SK-N-SH (cell line): ENCODE measurements at regions of chr18 and their contacts with region 1.

Region 1: DNA sequence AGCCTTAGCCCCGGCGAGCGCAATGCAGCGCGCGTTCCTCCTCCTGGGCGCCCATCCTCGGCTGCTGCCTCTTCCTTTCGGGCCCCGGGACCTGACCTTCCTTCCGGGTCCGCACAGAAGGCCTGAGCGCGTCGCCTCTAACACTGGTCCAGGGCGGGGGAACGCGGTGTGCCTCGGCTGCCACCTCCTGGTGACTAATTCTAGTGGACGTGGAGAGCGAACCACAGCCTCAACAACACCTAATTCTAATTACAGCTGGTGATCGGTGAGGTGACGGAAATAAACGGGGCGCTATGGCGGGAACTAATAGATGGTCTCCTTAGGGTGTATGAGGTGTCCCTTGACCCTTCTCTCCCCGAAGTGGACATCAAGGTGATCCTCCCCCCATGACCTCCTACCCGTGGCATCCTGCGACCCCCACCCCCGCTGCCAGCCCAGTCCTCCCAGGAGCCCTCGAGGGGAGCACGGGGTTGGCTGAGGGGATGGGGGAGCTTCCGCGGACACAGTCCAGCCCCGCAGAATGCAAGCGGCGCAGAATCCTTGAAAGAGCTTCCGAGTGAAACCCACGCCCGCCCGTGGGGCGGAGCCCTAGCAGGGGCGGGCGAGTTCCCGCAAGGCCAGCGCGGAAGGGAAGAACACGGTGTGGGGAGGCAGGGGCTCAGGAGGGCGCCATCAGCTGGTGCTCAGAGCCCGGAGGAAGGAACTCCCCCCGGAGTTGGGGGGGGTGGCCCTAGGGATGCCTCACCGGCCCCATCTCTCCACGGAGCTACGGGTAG is 12.8 kb upstream of the HMSD start:
- DNase-seq: peak; percentile 85
- H3K4me3 ChIP-seq: peak overlapping the region; percentile 53 to 62
- H3K27ac ChIP-seq: no peak overlapping the region
- H3K4me1 ChIP-seq: peaks cover 0 to 9% of the 10 kb centered on the region in 2 experiments; a peak in 2 of 4 replicates
- H3K27me3 ChIP-seq: peaks cover 19% of the 10 kb centered on the region; the same call in 1 of the 2 replicates
- CTCF ChIP-seq: peak; percentile 63
- EP300 ChIP-seq: no peak
- RAD21 ChIP-seq: peak; percentile 67

Region 2: DNA sequence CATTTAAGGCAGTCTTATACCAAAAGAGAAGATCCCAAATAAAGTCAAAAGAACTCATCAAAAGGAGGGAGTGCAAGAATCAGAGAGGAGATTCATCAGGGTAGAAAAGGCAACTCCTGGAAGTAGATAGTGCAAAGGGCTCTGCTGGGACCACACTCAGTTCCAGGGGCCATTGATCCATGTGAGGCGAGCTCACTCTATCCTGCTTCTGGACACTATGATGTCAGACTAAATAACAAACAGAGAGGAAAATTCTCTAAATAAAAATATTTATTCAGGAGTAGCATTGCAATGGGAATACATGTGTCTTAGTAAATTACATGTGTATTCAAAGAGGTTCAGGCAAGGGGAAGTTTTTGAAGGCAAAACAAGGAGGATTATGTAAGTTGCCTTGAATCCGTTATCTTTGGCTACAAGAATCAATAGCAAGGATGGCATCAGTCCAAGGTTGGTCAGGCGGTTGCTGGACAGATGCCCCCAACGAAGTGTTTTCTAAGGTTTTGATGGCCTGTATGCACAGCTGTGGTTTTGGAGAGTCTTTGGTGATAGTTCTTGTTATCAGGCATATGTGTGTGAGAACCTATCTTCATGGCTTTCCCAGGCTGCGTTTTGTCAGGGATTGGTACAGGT is 407.4 kb before region 1 on chr18:
- CTCF ChIA-PET with region 1: no interaction called
- POLR2A ChIA-PET with region 1: no interaction called
- DNase-seq: no peak
- H3K4me3 ChIP-seq: no peak overlapping the region
- H3K27ac ChIP-seq: no peak overlapping the region
- H3K4me1 ChIP-seq: no peaks in the 10 kb centered on the region
- H3K27me3 ChIP-seq: peaks cover 8% of the 10 kb centered on the region; the same call in 1 of the 2 replicates
- CTCF ChIP-seq: no peak
- EP300 ChIP-seq: no peak
- RAD21 ChIP-seq: no peak

Region 3: DNA sequence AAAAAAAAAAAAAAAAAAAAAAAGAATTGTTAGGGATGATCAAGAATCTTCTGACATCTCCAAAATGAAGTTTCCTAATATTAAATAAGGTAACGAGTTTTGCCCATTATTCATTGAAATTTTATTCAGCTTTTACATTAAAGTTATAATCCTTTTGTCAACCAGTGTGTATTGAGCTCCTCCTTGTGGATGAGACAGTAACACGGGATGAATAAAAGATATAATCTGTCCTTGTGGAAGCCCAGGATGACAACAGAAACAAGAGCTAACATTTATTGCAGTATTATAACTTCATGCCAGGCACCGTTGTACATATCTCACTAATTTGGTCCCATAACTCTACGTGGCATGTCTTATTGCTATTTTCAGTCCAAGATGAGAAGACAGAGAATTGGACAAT is 194.6 kb before region 1 on chr18:
- CTCF ChIA-PET with region 1: interaction called, 10 read pairs
- POLR2A ChIA-PET with region 1: no interaction called
- DNase-seq: no peak
- H3K4me3 ChIP-seq: no peak overlapping the region
- H3K27ac ChIP-seq: no peak overlapping the region
- H3K4me1 ChIP-seq: no peaks in the 10 kb centered on the region
- H3K27me3 ChIP-seq: no peaks in the 10 kb centered on the region
- CTCF ChIP-seq: peak; percentile 69
- EP300 ChIP-seq: no peak
- RAD21 ChIP-seq: peak; percentile 57

Region 4: DNA sequence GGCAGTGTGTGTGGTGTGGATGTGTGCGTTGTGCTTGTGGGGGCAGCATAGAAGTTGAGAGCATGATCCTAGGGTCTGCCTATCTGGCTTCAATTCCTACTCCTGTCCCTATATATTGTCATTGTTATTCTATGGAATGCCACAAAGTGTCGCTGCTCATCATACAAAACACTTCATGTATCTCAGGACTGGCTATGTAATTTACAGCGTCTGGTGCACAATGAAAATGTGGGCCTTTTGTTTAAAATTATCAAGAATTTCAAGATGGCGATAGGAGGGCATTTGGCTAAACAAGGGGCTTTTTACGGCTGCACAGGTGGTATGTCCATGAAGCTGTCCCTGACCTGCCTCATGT is 45.4 kb before region 1 on chr18:
- CTCF ChIA-PET with region 1: interaction called, 11 read pairs
- POLR2A ChIA-PET with region 1: no interaction called
- DNase-seq: peak; percentile 27
- H3K4me3 ChIP-seq: no peak overlapping the region
- H3K27ac ChIP-seq: no peak overlapping the region
- H3K4me1 ChIP-seq: no peaks in the 10 kb centered on the region
- H3K27me3 ChIP-seq: peaks cover 11% of the 10 kb centered on the region; the same call in 1 of the 2 replicates
- CTCF ChIP-seq: peak; percentile 46
- EP300 ChIP-seq: no peak
- RAD21 ChIP-seq: peak; percentile 65

Region 5: GRCh38 chr18:63963615-63964256 is 27.4 kb after region 1 on chr18:
- CTCF ChIA-PET with region 1: interaction called, 17 read pairs
- POLR2A ChIA-PET with region 1: no interaction called
- DNase-seq: peak; percentile 15
- H3K4me3 ChIP-seq: no peak overlapping the region
- H3K27ac ChIP-seq: no peak overlapping the region
- H3K4me1 ChIP-seq: no peaks in the 10 kb centered on the region
- H3K27me3 ChIP-seq: peaks cover 12% of the 10 kb centered on the region; the same call in 1 of the 2 replicates
- CTCF ChIP-seq: peak; percentile 84
- EP300 ChIP-seq: no peak
- RAD21 ChIP-seq: peak; percentile 70